ENCODE measurements at regions of chr2 and their contacts with region 1.

Region 1: GRCh38 chr2:43239981-43240761 is 13.8 kb upstream of the ZFP36L2 start:
- DNase-seq: no peak
- ATAC-seq: peak; percentile 7 to 58 (median 28)
- H3K4me3 ChIP-seq: no peak overlapping the region
- H3K27ac ChIP-seq: peak overlapping the region in 7 of 12 donors; percentile 27 to 95 (median 54)
- H3K4me1 ChIP-seq: peaks cover 0 to 62% (median 1%) of the 10 kb centered on the region in 12 donors
- H3K27me3 ChIP-seq: no peaks in the 10 kb centered on the region
- CTCF ChIP-seq: peak in 3 of 12 donors; percentile 5 to 23 (median 6)
- POLR2A ChIP-seq: no peak

Region 2: GRCh38 chr2:43276962-43277391 is 36.8 kb after region 1 on chr2:
- intact Hi-C with region 1: no loop called
- DNase-seq: peak in 1 of 5 donors; percentile 37
- ATAC-seq: peak in 2 of 4 donors; percentile 8 to 38
- H3K4me3 ChIP-seq: no peak overlapping the region
- H3K27ac ChIP-seq: peak overlapping the region in 10 of 12 donors; percentile 3 to 61 (median 29)
- H3K4me1 ChIP-seq: peaks cover 3 to 37% (median 17%) of the 10 kb centered on the region in 12 donors
- H3K27me3 ChIP-seq: no peaks in the 10 kb centered on the region
- CTCF ChIP-seq: no peak
- POLR2A ChIP-seq: no peak

Region 3: GRCh38 chr2:43542285-43542937 is 302.2 kb after region 1 on chr2:
- intact Hi-C with region 1: loop called in 1 of 10 experiments (anchors 10 kb)
- DNase-seq: no peak
- ATAC-seq: peak in 1 of 4 donors; percentile 33
- H3K4me3 ChIP-seq: no peak overlapping the region
- H3K27ac ChIP-seq: peak overlapping the region in 1 of 12 donors; percentile 62
- H3K4me1 ChIP-seq: peaks cover 0 to 28% (median 2%) of the 10 kb centered on the region in 12 donors
- H3K27me3 ChIP-seq: no peaks in the 10 kb centered on the region
- CTCF ChIP-seq: peak; percentile 50 to 74 (median 60)
- POLR2A ChIP-seq: no peak